Stomach (tissue), 19 donors: ENCODE measurements at regions of chr19 and their contacts with region 1.

Region 1: GRCh38 chr19:16751733-16752132 is 32.1 kb downstream of the NWD1 start:
- DNase-seq: no peak
- H3K4me3 ChIP-seq: no peak overlapping the region
- H3K27ac ChIP-seq: no peak overlapping the region
- H3K4me1 ChIP-seq: no peaks in the 10 kb centered on the region
- H3K27me3 ChIP-seq: peaks cover 0 to 4% (median 0%) of the 10 kb centered on the region in 3 donors
- CTCF ChIP-seq: no peak
- EP300 ChIP-seq: no peak
- POLR2A ChIP-seq: no peak

Region 2: DNA sequence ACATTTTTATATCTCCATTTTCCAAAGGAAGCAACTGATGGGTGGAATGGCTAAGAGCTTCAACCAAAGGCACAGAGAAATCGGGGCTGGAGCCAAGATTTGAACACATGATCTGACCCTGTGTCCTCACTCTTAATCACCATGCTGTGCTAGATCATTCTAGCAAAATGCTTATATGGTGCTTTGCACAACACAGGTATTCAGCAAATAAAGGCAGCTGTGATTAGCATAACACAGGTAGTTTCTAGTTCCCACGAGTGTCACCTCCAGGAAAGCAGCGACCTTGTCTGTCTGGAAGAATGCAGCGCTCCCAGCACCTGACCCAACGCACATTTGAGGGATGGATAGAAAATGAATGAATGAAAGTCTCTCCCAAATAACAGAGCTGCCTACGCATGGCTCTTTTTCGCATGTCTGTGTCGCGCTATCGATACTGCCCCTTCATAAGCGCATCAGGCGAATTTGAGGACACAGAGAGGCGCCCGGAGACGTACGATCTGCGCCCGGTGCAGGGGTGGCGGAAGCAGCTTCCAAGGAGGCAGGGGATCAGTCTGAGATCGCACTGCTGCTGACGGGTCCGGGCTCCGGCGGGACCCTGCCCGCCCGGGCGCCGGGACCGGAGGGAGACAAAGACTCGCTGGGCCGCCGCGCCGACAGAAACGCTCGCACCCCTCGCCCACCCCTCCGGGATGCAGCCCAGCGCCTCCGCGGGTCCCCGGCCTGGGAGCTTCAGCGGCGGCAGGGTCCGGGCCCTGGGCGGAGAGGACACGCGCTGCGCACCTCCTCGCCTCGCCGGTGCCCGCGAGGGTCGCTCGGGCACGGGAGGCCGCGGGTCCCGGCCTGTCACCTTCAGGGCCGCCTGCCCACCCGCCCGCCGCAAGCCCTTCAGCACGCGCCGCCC is 280.6 kb before region 1 on chr19:
- intact Hi-C with region 1: loop called (anchors 10 kb)
- DNase-seq: peak in 1 of 2 donors; percentile 44
- H3K4me3 ChIP-seq: peak overlapping the region; percentile 94 to 100 (median 98)
- H3K27ac ChIP-seq: peak overlapping the region; percentile 78 to 95 (median 93)
- H3K4me1 ChIP-seq: peaks cover 15 to 54% (median 46%) of the 10 kb centered on the region in 4 donors
- H3K27me3 ChIP-seq: no peaks in the 10 kb centered on the region
- CTCF ChIP-seq: no peak
- EP300 ChIP-seq: no peak
- POLR2A ChIP-seq: no peak